Natural killer cell (primary cell): ENCODE measurements at regions of chr6 and their contacts with region 1.

Region 1: GRCh38 chr6:33156561-33156960 is 35.7 kb downstream of the COL11A2 start:
- DNase-seq: no peak
- ATAC-seq: no peak
- H3K4me3 ChIP-seq: no peak overlapping the region
- H3K4me3 Mint-ChIP-seq: no peak overlapping the region
- H3K27ac ChIP-seq: no peak overlapping the region
- H3K27ac Mint-ChIP-seq: no peak overlapping the region
- H3K4me1 ChIP-seq: peaks cover 6% of the 10 kb centered on the region
- H3K4me1 Mint-ChIP-seq: peaks cover 5 to 6% of the 10 kb centered on the region in 2 donors
- H3K27me3 ChIP-seq: no peaks in the 10 kb centered on the region
- H3K27me3 Mint-ChIP-seq: peaks cover 2 to 8% of the 10 kb centered on the region in 2 donors
- CTCF ChIP-seq: no peak

Region 2: DNA sequence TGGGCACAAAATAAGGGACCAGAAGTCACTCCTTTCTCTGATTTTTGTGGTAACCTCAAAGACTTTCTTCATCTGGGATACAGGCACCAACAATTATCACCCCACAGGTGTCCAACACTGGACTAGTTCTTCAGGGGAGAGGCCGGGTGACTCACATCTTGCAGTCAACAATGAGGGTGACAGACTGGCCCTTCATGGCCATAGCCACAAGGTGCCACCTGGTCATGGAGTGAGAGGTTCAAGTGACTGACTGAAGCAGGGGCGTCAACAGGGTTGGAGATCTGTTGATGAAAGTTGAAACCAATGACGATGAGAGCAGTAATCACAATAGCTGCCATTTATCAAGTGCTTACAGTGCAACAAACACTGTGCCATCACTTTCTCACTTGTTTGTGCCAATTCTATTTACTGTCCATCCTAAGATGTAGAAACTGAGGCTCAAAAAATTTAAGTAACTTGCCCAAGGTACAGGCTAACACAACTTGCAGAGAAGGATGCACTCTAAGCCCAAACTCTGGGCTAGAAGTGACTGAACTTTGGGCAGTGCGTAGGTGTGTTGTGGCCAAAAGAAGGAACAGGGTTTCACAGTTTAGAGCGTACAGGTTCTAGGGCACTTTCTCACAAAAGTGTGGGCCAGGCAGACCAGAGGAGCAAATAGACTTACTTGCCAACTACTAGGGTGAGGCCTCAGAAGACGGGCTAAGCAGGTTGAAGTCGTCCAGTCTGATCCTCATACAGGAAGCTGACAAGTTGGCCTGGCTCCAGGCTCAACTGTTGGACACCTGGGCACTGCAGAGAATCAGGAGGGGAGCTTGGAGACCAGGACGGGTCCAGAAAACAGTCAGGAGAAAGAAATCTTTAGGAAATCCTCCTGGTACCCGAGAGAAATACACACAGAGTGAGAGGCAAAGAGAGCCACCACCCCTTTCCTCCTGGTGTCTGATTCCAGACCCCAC is 50.4 kb before region 1 on chr6:
- intact Hi-C with region 1: loop called (anchors 10 kb)
- DNase-seq: no peak
- ATAC-seq: no peak
- H3K4me3 ChIP-seq: no peak overlapping the region
- H3K4me3 Mint-ChIP-seq: no peak overlapping the region
- H3K27ac ChIP-seq: no peak overlapping the region
- H3K27ac Mint-ChIP-seq: no peak overlapping the region
- H3K4me1 ChIP-seq: no peaks in the 10 kb centered on the region
- H3K4me1 Mint-ChIP-seq: no peaks in the 10 kb centered on the region
- H3K27me3 ChIP-seq: no peaks in the 10 kb centered on the region
- H3K27me3 Mint-ChIP-seq: peaks cover 49 to 63% of the 10 kb centered on the region in 2 donors
- CTCF ChIP-seq: no peak

Region 3: GRCh38 chr6:33191383-33192104 is 35.0 kb after region 1 on chr6:
- intact Hi-C with region 1: no loop called
- DNase-seq: no peak
- ATAC-seq: no peak
- H3K4me3 ChIP-seq: no peak overlapping the region
- H3K4me3 Mint-ChIP-seq: no peak overlapping the region
- H3K27ac ChIP-seq: no peak overlapping the region
- H3K27ac Mint-ChIP-seq: no peak overlapping the region
- H3K4me1 ChIP-seq: peaks cover 21% of the 10 kb centered on the region
- H3K4me1 Mint-ChIP-seq: peaks cover 7 to 30% of the 10 kb centered on the region in 2 donors
- H3K27me3 ChIP-seq: peaks cover 18% of the 10 kb centered on the region
- H3K27me3 Mint-ChIP-seq: peaks cover 41 to 42% of the 10 kb centered on the region in 2 donors
- CTCF ChIP-seq: no peak